Activated T-helper 1 cell treated with anti-CD3 and anti-CD28 coated beads, Interleukin-12 subunit alpha, Interleukin-12 subunit beta, Interleukin-2, Interleukin-4 antibody, amounts not matched to agents 30 ng/mL and 10 ng/mL and 1 ng/mL, durations not matched to agents 14 hours and 24 hours and 36 hours (primary cell): ENCODE measurements at regions of chr4 and their contacts with region 1.

Region 1: GRCh38 chr4:103099691-103100392 is at the start of gene BDH2:
- DNase-seq: peak; percentile 41
- H3K4me3 Mint-ChIP-seq: peak within 1 kb of the TSS; percentile 84
- H3K27ac Mint-ChIP-seq: peak within 1 kb of the TSS; percentile 86
- H3K4me1 Mint-ChIP-seq: peaks cover 28% of the 10 kb centered on the region
- H3K27me3 Mint-ChIP-seq: no peaks in the 10 kb centered on the region
- total RNA-seq, gene BDH2: 9.1 and 11.0 TPM in 2 replicates

Region 2: DNA sequence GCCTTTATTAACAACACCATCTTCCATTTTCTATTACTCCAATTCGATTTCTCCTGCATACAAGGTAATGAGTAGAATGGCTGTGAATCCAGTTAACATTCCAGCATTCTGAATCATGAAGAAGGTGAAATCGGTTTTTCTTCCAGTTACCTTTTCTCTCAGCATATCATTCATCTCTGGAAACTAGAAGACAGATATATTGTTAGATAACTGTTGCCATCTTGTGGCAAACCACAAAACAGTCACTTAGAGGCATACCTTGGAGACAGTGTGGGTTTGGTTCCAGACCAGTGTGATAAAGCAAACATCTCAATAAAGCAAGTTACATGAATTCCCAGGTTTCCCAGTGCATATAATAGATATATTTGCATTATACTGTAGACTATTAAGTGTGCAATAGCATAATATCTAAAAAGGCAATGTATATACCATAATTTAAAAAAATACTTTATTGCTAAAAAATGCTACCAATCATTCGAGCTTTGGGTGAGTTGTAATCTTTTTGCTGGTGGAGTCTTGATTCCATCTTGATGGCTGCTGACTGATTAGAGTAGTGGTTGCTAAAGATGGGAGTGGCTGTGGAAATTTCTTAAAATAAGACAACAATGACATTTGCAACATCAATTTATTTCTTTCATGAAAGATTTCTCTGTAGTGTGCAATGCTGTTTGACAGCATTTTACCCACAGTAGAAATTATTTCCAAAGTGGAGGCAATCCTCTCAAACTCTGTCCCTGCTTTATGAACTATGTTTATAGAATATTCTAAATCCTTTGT is 836.6 kb before region 1 on chr4:
- intact Hi-C with region 1: loop called (anchors 10 kb)
- DNase-seq: no peak
- H3K4me3 Mint-ChIP-seq: no peak overlapping the region
- H3K27ac Mint-ChIP-seq: peak overlapping the region; percentile 19
- H3K4me1 Mint-ChIP-seq: peaks cover 16% of the 10 kb centered on the region
- H3K27me3 Mint-ChIP-seq: no peaks in the 10 kb centered on the region

Region 3: GRCh38 chr4:102449751-102450352 is 650.0 kb before region 1 on chr4:
- intact Hi-C with region 1: loop called (anchors 5 kb)
- DNase-seq: peak; percentile 52
- H3K4me3 Mint-ChIP-seq: no peak overlapping the region
- H3K27ac Mint-ChIP-seq: no peak overlapping the region
- H3K4me1 Mint-ChIP-seq: peaks cover 36% of the 10 kb centered on the region
- H3K27me3 Mint-ChIP-seq: peaks cover under 1% of the 10 kb centered on the region

Region 4: GRCh38 chr4:102815981-102816380 is 283.9 kb before region 1 on chr4:
- intact Hi-C with region 1: loop called (anchors 2 kb)
- DNase-seq: no peak
- H3K4me3 Mint-ChIP-seq: no peak overlapping the region
- H3K27ac Mint-ChIP-seq: peak overlapping the region; percentile 84
- H3K4me1 Mint-ChIP-seq: peaks cover 87% of the 10 kb centered on the region
- H3K27me3 Mint-ChIP-seq: no peaks in the 10 kb centered on the region

Region 5: DNA sequence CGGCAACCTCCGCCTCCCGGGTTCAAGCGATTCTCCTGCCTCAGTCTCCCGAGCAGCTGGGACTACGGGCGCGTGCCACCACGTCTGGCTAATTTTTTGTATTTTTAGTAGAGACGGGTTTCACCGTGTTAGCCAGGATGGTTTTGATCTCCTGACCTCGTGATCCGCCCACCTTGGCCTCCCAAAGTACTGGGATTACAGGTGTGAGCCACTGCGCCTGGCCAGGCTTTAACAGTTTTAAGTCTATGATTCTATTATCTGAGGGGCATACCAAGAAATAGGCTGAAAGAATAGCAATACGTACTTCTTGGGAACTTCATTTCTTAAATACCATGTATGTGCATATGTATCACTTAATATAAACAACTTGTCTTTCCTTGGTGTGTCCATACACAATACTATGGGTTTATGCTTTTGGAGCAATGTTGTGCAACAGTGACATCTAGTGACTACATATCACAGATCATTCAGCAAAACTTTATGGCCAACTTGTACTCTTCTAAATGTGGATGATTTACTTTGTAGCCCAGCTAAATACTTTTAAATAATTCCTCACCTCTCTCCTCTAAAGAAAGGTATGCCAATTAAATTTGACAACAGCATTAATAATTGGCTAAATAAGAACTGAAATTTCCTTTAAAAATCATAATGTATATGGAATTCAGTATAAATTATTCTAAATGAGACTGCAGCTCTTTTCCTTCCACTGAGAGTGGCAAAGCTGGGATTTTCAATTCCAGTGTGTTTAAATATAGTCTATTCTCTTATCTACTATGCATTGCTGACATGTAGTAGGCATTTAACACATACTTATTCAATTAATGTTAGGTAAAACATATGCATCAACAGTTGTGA is 90.7 kb before region 1 on chr4:
- intact Hi-C with region 1: loop called (anchors 2 kb)
- DNase-seq: peak; percentile 32
- H3K4me3 Mint-ChIP-seq: no peak overlapping the region
- H3K27ac Mint-ChIP-seq: no peak overlapping the region
- H3K4me1 Mint-ChIP-seq: no peaks in the 10 kb centered on the region
- H3K27me3 Mint-ChIP-seq: peaks cover 4% of the 10 kb centered on the region

Region 6: GRCh38 chr4:103046416-103047290 is 53.2 kb before region 1 on chr4:
- intact Hi-C with region 1: loop called (anchors 2 kb)
- DNase-seq: peak; percentile 20
- H3K4me3 Mint-ChIP-seq: no peak overlapping the region
- H3K27ac Mint-ChIP-seq: no peak overlapping the region
- H3K4me1 Mint-ChIP-seq: peaks cover 19% of the 10 kb centered on the region
- H3K27me3 Mint-ChIP-seq: no peaks in the 10 kb centered on the region

Region 7: DNA sequence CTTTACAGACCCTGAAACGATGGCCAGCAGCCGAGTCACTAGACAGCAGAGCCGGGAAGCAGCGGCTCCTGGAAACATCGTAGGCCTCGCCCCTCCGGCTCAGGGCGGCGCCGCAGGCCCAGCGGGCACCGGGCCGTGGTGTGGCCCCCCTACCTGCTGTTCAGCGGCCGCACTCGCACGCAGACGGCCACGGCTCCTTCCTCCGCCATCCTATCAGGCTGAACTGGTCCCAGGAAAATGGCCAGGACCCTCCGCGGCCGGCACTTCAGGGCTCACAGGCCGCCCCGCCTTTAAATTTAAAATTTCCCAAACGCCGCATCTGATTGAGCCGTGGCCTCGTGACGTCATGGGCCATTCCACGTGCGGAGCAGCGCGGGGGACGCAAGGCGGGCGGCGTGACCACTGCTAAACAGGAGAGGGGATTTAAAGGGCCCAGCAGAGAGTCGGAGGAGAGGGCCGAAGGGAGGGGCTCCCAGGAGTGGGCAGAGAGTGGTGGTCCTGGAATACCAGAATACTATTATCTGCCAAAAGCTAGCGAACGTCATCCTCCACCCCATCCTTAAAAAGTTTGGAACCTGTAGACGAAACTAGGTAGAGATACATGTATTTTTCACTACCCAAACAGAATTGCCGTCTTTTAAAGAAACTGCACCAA is 98.4 kb after region 1 on chr4 and contains the start of gene CENPE:
- intact Hi-C with region 1: loop called (anchors 1 kb)
- DNase-seq: peak; percentile 85
- H3K4me3 Mint-ChIP-seq: peak within 1 kb of the TSS; percentile 88
- H3K27ac Mint-ChIP-seq: peak within 1 kb of the TSS; percentile 99
- H3K4me1 Mint-ChIP-seq: peaks cover 23% of the 10 kb centered on the region
- H3K27me3 Mint-ChIP-seq: peaks cover 6% of the 10 kb centered on the region
- total RNA-seq, gene CENPE: 18.7 and 22.6 TPM in 2 replicates